ENCODE measurements at regions of chr16 and their contacts with region 1.

Region 1: GRCh38 chr16:27253526-27253930 is 15.0 kb downstream of the NSMCE1 start:
- DNase-seq: peak; percentile 83
- H3K4me3 ChIP-seq: no peak overlapping the region
- H3K27ac ChIP-seq: peak overlapping the region; percentile 48
- H3K4me1 ChIP-seq: peaks cover 48% of the 10 kb centered on the region
- H3K27me3 ChIP-seq: no peaks in the 10 kb centered on the region
- CTCF ChIP-seq: no peak
- POLR2A ChIP-seq: no peak

Region 2: GRCh38 chr16:27189335-27189972 is 64.1 kb before region 1 on chr16:
- CTCF ChIA-PET with region 1: no interaction called
- POLR2A ChIA-PET with region 1: no interaction called
- dilution Hi-C with region 1: no loop called
- intact Hi-C with region 1: no loop called
- DNase-seq: no peak
- H3K4me3 ChIP-seq: no peak overlapping the region
- H3K27ac ChIP-seq: no peak overlapping the region
- H3K4me1 ChIP-seq: no peaks in the 10 kb centered on the region
- H3K27me3 ChIP-seq: peaks cover 4 to 5% of the 10 kb centered on the region in 2 experiments
- CTCF ChIP-seq: no peak
- POLR2A ChIP-seq: no peak

Region 3: GRCh38 chr16:27242868-27243590 is 10.5 kb before region 1 on chr16:
- CTCF ChIA-PET with region 1: interaction called, 11 read pairs
- POLR2A ChIA-PET with region 1: interaction called, 3 read pairs
- dilution Hi-C with region 1: no loop called
- intact Hi-C with region 1: loop called (anchors 1 kb)
- DNase-seq: peak; percentile 96
- H3K4me3 ChIP-seq: peak overlapping the region in 1 of 3 experiments; percentile 1
- H3K27ac ChIP-seq: peak overlapping the region; percentile 96
- H3K4me1 ChIP-seq: peaks cover 62% of the 10 kb centered on the region
- H3K27me3 ChIP-seq: no peaks in the 10 kb centered on the region
- CTCF ChIP-seq: peak in 1 of 2 donors; percentile 11
- POLR2A ChIP-seq: peak; percentile 52

Region 4: DNA sequence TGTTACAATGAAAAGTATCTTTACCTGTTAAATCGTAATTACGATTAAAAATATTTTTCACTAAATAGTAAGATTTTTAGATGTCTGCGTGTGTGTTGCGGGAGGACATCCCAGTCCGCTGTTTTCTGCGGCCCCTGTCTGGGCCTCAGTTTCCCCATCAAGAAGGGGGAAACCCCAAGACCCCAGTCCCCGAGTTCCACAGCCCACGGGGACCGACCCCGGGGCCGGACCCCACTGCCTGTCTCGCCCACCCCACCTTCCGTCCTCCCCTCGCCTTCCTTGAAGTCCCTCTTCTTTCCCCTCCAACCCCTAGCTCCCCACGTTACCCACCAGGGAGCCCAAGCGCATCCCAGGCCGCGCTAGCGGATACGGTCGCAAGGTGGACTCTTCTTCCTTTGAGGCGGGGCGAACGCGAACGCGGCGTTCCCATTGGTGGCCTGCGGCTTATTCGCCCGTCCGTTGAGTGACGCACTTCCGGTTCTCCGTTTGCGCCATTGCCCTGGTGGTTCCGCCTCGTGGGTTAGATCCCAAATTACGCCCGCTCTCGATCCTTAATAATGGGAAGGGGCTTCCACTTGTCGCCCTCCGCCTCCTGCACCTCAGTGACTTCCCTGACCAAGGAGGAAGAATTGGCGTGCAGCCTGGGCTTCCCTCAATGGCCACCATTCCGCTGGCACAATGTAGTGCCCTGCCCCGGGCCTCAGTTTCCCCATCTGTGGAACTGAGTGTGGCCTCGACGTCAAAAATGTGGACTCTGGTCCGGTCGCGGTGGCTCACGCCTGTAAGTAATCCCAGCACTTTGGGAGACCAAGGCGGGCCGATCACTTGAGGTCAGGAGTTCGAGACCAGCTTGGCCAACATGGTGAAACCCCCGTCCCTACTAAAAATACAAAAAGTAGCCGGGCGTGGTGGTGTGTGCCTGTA is 15.1 kb after region 1 on chr16 and contains the start of gene NSMCE1:
- CTCF ChIA-PET with region 1: interaction called, 3 read pairs
- POLR2A ChIA-PET with region 1: no interaction called
- dilution Hi-C with region 1: no loop called
- intact Hi-C with region 1: loop called (anchors 1 kb)
- DNase-seq: peak; percentile 92
- H3K4me3 ChIP-seq: peak within 1 kb of the TSS; percentile 61 to 78 (median 77)
- H3K27ac ChIP-seq: peak within 1 kb of the TSS; percentile 58
- H3K4me1 ChIP-seq: peaks cover 16% of the 10 kb centered on the region
- H3K27me3 ChIP-seq: no peaks in the 10 kb centered on the region
- CTCF ChIP-seq: peak in 1 of 2 donors; percentile 23
- POLR2A ChIP-seq: peak; percentile 86
- total RNA-seq, gene NSMCE1: 42.0 and 46.4 TPM in 2 replicates